Activated CD4-positive, alpha-beta T cell treated with anti-CD3 and anti-CD28 coated beads for 36 hours (primary cell): ENCODE measurements at regions of chr1 and their contacts with region 1.

Region 1: GRCh38 chr1:7070389-7071029 is 285.3 kb downstream of the CAMTA1 start:
- DNase-seq: peak; percentile 76
- ATAC-seq: peak; percentile 81
- H3K4me3 Mint-ChIP-seq: no peak overlapping the region
- H3K27ac Mint-ChIP-seq: no peak overlapping the region
- H3K4me1 Mint-ChIP-seq: peaks cover 2% of the 10 kb centered on the region
- H3K27me3 Mint-ChIP-seq: peaks cover 30% of the 10 kb centered on the region

Region 2: DNA sequence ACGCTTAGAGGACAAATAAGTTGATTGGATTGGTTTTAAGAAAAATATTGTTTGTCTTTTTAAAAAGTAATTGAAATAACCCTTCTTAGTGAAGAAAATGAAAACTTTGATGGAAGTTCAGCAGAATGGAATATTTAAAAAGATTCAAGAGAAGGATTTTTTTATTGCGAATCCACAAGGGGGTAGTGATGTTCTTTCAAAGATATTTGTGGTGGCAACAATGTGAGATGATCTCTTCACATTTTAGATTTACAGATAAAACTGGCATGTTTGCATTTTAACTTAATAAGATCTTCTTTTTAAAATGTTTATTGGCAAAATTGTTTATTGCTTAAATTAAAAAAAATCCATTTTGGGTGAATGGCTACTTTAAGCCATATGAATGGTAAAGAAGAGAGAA is 276.3 kb before region 1 on chr1:
- CTCF ChIA-PET with region 1: interaction called, 3 read pairs
- POLR2A ChIA-PET with region 1: no interaction called
- intact Hi-C with region 1: loop called (anchors 1 to 5 kb)
- DNase-seq: no peak
- ATAC-seq: no peak
- H3K4me3 Mint-ChIP-seq: no peak overlapping the region
- H3K27ac Mint-ChIP-seq: no peak overlapping the region
- H3K4me1 Mint-ChIP-seq: peaks cover 27% of the 10 kb centered on the region
- H3K27me3 Mint-ChIP-seq: no peaks in the 10 kb centered on the region

Region 3: GRCh38 chr1:6889875-6890480 is 180.5 kb before region 1 on chr1:
- CTCF ChIA-PET with region 1: no interaction called
- POLR2A ChIA-PET with region 1: no interaction called
- intact Hi-C with region 1: loop called in 1 of 2 experiments (anchors 5 kb)
- DNase-seq: peak; percentile 65
- ATAC-seq: peak; percentile 51
- H3K4me3 Mint-ChIP-seq: no peak overlapping the region
- H3K27ac Mint-ChIP-seq: no peak overlapping the region
- H3K4me1 Mint-ChIP-seq: peaks cover under 1% of the 10 kb centered on the region
- H3K27me3 Mint-ChIP-seq: no peaks in the 10 kb centered on the region

Region 4: GRCh38 chr1:6998267-6998666 is 72.2 kb before region 1 on chr1:
- CTCF ChIA-PET with region 1: no interaction called
- POLR2A ChIA-PET with region 1: no interaction called
- intact Hi-C with region 1: no loop called
- DNase-seq: no peak
- ATAC-seq: no peak
- H3K4me3 Mint-ChIP-seq: no peak overlapping the region
- H3K27ac Mint-ChIP-seq: no peak overlapping the region
- H3K4me1 Mint-ChIP-seq: peaks cover 25% of the 10 kb centered on the region
- H3K27me3 Mint-ChIP-seq: peaks cover 12% of the 10 kb centered on the region

Region 5: GRCh38 chr1:7026169-7026568 is 44.3 kb before region 1 on chr1:
- CTCF ChIA-PET with region 1: no interaction called
- POLR2A ChIA-PET with region 1: no interaction called
- intact Hi-C with region 1: no loop called
- DNase-seq: no peak
- ATAC-seq: no peak
- H3K4me3 Mint-ChIP-seq: no peak overlapping the region
- H3K27ac Mint-ChIP-seq: no peak overlapping the region
- H3K4me1 Mint-ChIP-seq: no peaks in the 10 kb centered on the region
- H3K27me3 Mint-ChIP-seq: no peaks in the 10 kb centered on the region

Region 6: GRCh38 chr1:7042322-7043190 is 28.0 kb before region 1 on chr1:
- CTCF ChIA-PET with region 1: interaction called, 17 read pairs
- POLR2A ChIA-PET with region 1: no interaction called
- intact Hi-C with region 1: loop called in 1 of 2 experiments (anchors 2 kb)
- DNase-seq: no peak
- ATAC-seq: no peak
- H3K4me3 Mint-ChIP-seq: no peak overlapping the region
- H3K27ac Mint-ChIP-seq: no peak overlapping the region
- H3K4me1 Mint-ChIP-seq: no peaks in the 10 kb centered on the region
- H3K27me3 Mint-ChIP-seq: peaks cover 3% of the 10 kb centered on the region

Region 7: DNA sequence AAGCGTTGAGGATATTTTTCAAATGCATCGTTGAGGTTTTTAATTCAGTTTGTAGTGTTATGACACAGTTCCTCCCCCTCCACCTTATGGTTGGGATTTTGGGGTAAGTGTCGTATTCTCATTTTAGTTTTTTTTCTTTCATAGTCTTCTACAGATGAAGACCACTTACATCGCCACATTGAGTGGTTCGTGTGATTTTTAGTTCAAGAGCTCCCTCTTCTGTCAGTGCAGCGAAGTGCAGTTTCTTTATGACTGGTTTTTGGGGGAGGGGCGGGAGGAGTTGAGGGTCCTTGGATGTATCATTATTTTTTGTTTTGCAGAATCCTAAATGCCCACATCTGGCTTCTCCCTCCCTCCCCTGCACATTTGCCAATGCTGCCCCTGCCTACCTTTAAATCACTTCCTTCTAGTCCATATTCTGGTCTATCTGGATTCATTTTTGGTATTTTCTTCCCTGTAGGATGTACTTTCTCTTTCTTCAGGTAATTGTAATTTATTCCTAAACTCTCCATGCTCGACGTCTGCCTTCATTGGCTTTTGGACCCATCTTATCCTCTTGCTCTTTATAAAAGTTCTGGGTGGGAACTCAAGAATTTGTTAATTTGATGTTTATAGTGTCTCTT is 147.8 kb after region 1 on chr1:
- CTCF ChIA-PET with region 1: no interaction called
- POLR2A ChIA-PET with region 1: no interaction called
- intact Hi-C with region 1: loop called in 1 of 2 experiments (anchors 1 kb)
- DNase-seq: peak; percentile 52
- ATAC-seq: no peak
- H3K4me3 Mint-ChIP-seq: no peak overlapping the region
- H3K27ac Mint-ChIP-seq: no peak overlapping the region
- H3K4me1 Mint-ChIP-seq: no peaks in the 10 kb centered on the region
- H3K27me3 Mint-ChIP-seq: peaks cover 21% of the 10 kb centered on the region